ENCODE measurements at regions of chr6 and their contacts with region 1.

Region 1: GRCh38 chr6:154247119-154247861 is 109.3 kb downstream of the IPCEF1 start:
- DNase-seq: no peak
- ATAC-seq: peak; percentile 60
- H3K4me3 Mint-ChIP-seq: peak overlapping the region; percentile 95
- H3K27ac Mint-ChIP-seq: peak overlapping the region; percentile 97
- H3K4me1 Mint-ChIP-seq: peaks cover 75% of the 10 kb centered on the region
- H3K27me3 Mint-ChIP-seq: no peaks in the 10 kb centered on the region

Region 2: GRCh38 chr6:154234019-154234772 is 13.1 kb before region 1 on chr6:
- POLR2A ChIA-PET with region 1: interaction called, 56 read pairs
- DNase-seq: no peak
- ATAC-seq: no peak
- H3K4me3 Mint-ChIP-seq: peak overlapping the region; percentile 55
- H3K27ac Mint-ChIP-seq: peak overlapping the region; percentile 64
- H3K4me1 Mint-ChIP-seq: peaks cover 50% of the 10 kb centered on the region
- H3K27me3 Mint-ChIP-seq: no peaks in the 10 kb centered on the region

Region 3: DNA sequence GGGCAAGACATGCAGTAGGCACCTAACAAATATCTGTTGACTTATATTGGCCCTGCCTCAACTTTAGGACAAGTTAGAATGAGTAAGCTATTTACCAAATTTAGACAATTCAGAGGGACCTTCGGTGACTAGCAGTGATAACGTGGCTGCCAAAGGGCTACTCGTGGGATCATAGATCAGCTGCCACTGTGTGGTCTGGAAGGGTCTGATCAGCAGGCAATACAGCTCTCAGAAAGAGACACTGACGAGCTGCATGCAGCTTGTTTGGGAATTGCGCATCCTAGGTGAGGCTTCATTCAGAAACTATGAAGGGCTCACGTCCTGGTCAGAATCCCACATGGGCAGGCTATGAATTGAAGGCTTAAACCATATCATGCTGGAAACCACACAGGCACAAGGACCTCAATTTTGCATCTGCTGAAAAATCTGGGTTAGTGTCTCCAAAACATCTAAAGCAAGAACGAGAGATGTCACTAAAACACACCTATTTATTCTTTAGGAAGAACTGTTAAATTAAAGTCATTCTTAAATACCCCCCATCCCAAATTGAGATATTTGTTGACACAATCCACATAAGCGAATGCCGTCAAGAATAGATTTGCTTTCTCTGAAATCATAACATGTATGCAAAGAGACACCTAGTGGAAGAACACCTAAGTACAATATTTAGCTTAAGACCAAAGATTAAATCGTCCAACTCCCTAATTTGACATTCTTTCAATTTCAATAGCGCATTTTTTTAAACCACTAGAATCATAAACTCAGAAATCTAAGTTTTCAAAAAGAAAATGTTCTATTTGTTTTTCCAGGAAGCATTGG is 29.7 kb after region 1 on chr6:
- POLR2A ChIA-PET with region 1: interaction called, 10 read pairs
- DNase-seq: no peak
- ATAC-seq: peak; percentile 40
- H3K4me3 Mint-ChIP-seq: peak overlapping the region; percentile 67
- H3K27ac Mint-ChIP-seq: peak overlapping the region; percentile 25
- H3K4me1 Mint-ChIP-seq: peaks cover 21% of the 10 kb centered on the region
- H3K27me3 Mint-ChIP-seq: peaks cover 2% of the 10 kb centered on the region

Measured in activated naive CD8-positive, alpha-beta T cell treated with anti-CD3 and anti-CD28 coated beads, Interleukin-2, amount 10 ng/mL, durations not matched to agents 7 days and 5 days (primary cell).